Activated T-helper 2 cell treated with anti-CD3 and anti-CD28 coated beads, Interferon-gamma antibody, Interleukin-2, Interleukin-4, amounts not matched to agents 10 μg/mL and 5 μg/mL and 100 μg/mL, durations not matched to agents 14 hours and 24 hours and 36 hours (primary cell): ENCODE measurements at regions of chrX and their contacts with region 1.

Region 1: DNA sequence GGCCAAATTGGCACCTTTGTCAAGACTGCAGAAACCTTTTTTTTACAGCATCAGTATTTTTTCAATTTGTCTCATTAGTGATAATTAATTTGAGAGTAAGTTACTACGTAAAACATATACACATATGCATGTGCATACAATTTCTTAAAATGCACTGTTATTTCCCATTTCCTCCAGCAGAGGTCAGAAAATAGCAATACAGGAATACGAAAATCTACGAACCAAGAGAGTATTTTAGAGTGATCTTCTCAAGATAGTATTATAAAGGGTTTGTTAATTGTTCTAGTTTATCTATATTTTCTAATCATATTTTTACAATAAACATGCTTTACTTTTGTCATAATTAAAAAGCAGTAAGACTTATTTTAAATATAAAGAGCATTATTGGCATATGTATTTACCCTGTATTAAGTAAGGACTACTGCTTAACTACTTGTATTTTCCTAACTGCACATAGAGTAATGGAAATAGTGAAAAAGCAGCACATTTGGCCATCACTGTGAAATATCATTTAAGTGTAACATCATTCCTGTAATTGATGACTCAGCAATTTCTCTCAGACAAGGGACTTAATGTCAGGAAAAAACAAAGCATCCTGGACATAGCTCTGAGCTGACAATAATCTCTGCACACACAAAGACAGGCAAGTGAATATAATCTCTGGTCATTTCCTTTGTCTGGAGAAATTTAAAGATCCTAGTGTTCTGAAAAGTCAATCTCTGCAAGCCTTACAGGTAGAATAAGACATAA is 45.6 kb downstream of the MAOB start:
- DNase-seq: no peak
- H3K4me3 Mint-ChIP-seq: no peak overlapping the region
- H3K27ac Mint-ChIP-seq: no peak overlapping the region
- H3K4me1 Mint-ChIP-seq: peaks cover 22% of the 10 kb centered on the region
- H3K27me3 Mint-ChIP-seq: no peaks in the 10 kb centered on the region

Region 2: GRCh38 chrX:43949669-43950068 is 113.1 kb after region 1 on chrX:
- intact Hi-C with region 1: loop called (anchors 10 kb)
- DNase-seq: no peak
- H3K4me3 Mint-ChIP-seq: no peak overlapping the region
- H3K27ac Mint-ChIP-seq: no peak overlapping the region
- H3K4me1 Mint-ChIP-seq: peaks cover 11% of the 10 kb centered on the region
- H3K27me3 Mint-ChIP-seq: no peaks in the 10 kb centered on the region

Region 3: GRCh38 chrX:44244008-44244407 is 407.4 kb after region 1 on chrX:
- intact Hi-C with region 1: loop called (anchors 10 kb)
- DNase-seq: no peak
- H3K4me3 Mint-ChIP-seq: no peak overlapping the region
- H3K27ac Mint-ChIP-seq: no peak overlapping the region
- H3K4me1 Mint-ChIP-seq: peaks cover 1% of the 10 kb centered on the region
- H3K27me3 Mint-ChIP-seq: peaks cover 3% of the 10 kb centered on the region